ENCODE measurements at regions of chr1 and their contacts with region 1.

Region 1: GRCh38 chr1:155167166-155168104 is 5.7 kb downstream of the KRTCAP2 start:
- DNase-seq: peak; percentile 77 to 91
- ATAC-seq: peak; percentile 84 to 90
- H3K4me3 ChIP-seq: peak overlapping the region; percentile 34
- H3K27ac ChIP-seq: peak overlapping the region; percentile 62 to 81
- H3K4me1 ChIP-seq: peaks cover 12% of the 10 kb centered on the region
- CTCF ChIP-seq: peak; percentile 94
- EP300 ChIP-seq: no peak
- POLR2A ChIP-seq: no peak
- RAD21 ChIP-seq: peak; percentile 93 to 98

Region 2: DNA sequence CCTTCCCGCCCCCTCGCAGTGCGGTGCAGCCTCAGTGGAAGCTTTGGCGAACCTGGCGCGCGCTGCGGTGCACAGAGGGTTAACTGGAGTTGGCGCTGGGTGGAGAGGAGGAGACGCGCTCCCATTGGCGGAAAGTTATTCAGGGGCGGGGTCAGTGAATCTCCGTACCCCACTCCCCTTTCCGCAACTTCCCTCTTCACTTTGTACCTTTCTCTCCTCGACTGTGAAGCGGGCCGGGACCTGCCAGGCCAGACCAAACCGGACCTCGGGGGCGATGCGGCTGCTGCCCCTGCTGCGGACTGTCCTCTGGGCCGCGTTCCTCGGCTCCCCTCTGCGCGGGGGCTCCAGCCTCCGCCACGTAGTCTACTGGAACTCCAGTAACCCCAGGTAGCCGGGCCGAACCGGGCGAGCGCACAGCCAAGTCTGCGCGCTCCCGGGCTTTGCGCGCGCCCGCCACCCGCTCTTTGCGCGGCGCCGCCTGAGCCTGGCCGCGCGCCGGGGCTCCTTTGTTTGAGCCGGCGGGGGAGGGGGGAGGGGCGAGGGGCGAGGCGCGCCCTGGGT is 103.8 kb before region 1 on chr1 and contains the start of gene EFNA4:
- CTCF ChIA-PET with region 1: interaction called, 12 read pairs
- POLR2A ChIA-PET with region 1: no interaction called
- DNase-seq: peak; percentile 89 to 91
- ATAC-seq: peak; percentile 72 to 86
- H3K4me3 ChIP-seq: peak within 1 kb of the TSS; percentile 77
- H3K27ac ChIP-seq: peak within 1 kb of the TSS; percentile 81 to 91
- H3K4me1 ChIP-seq: peaks cover 23% of the 10 kb centered on the region
- CTCF ChIP-seq: no peak
- EP300 ChIP-seq: no peak
- POLR2A ChIP-seq: peak; percentile 77
- RAD21 ChIP-seq: no peak
- polyA plus RNA-seq, gene EFNA4: 3.1 and 4.9 TPM in 2 replicates

Region 3: DNA sequence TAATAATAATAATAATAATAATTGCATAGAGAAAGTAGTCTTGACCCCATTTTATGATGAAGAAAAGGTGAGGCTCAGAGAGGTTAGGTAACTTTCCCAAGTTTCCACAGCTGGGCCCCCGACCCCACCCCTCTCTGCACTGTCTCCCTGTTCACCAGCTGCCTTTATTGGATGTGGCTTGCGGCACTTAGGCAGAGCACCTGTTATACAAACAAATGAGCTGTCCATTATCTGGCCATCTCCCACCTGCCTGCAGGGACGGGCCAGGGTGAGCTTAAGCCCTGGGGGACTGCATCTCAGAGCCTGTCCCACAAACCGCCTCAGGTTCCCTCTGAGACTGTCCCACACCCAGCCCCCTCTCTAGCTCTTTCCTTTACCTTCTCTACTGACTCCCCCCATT is 49.8 kb before region 1 on chr1:
- CTCF ChIA-PET with region 1: interaction called, 202 read pairs
- POLR2A ChIA-PET with region 1: no interaction called
- DNase-seq: no peak
- ATAC-seq: no peak
- H3K4me3 ChIP-seq: no peak overlapping the region
- H3K27ac ChIP-seq: no peak overlapping the region
- H3K4me1 ChIP-seq: no peaks in the 10 kb centered on the region
- CTCF ChIP-seq: no peak
- EP300 ChIP-seq: no peak
- POLR2A ChIP-seq: no peak
- RAD21 ChIP-seq: no peak

Region 4: GRCh38 chr1:155145491-155145890 is 21.9 kb before region 1 on chr1:
- CTCF ChIA-PET with region 1: interaction called, 75 read pairs
- POLR2A ChIA-PET with region 1: no interaction called
- DNase-seq: no peak
- ATAC-seq: peak in 1 of 2 experiments; percentile 52; a peak in 1 of 6 replicates
- H3K4me3 ChIP-seq: no peak overlapping the region
- H3K27ac ChIP-seq: no peak overlapping the region
- H3K4me1 ChIP-seq: no peaks in the 10 kb centered on the region
- CTCF ChIP-seq: no peak
- EP300 ChIP-seq: no peak
- POLR2A ChIP-seq: no peak
- RAD21 ChIP-seq: no peak

Region 5: GRCh38 chr1:155261852-155262673 is 94.6 kb after region 1 on chr1 and contains the start of gene SCAMP3:
- CTCF ChIA-PET with region 1: no interaction called
- POLR2A ChIA-PET with region 1: no interaction called
- DNase-seq: peak; percentile 99 to 100
- ATAC-seq: peak; percentile 96 to 98
- H3K4me3 ChIP-seq: peak within 1 kb of the TSS; percentile 86
- H3K27ac ChIP-seq: peak within 1 kb of the TSS; percentile 88 to 97
- H3K4me1 ChIP-seq: peaks cover 14% of the 10 kb centered on the region
- CTCF ChIP-seq: no peak
- EP300 ChIP-seq: no peak
- POLR2A ChIP-seq: peak; percentile 84
- RAD21 ChIP-seq: no peak
- polyA plus RNA-seq, gene SCAMP3: 135 and 147 TPM in 2 replicates